A673 (cell line): ENCODE measurements at regions of chr16 and their contacts with region 1.

Region 1: GRCh38 chr16:1194665-1195392 is 30.2 kb downstream of the TPSG1 start:
- DNase-seq: no peak
- H3K4me3 ChIP-seq: no peak overlapping the region
- H3K27ac ChIP-seq: no peak overlapping the region
- H3K4me1 ChIP-seq: peaks cover 10% of the 10 kb centered on the region
- H3K27me3 ChIP-seq: no peaks in the 10 kb centered on the region
- CTCF ChIP-seq: peak; percentile 88

Region 2: DNA sequence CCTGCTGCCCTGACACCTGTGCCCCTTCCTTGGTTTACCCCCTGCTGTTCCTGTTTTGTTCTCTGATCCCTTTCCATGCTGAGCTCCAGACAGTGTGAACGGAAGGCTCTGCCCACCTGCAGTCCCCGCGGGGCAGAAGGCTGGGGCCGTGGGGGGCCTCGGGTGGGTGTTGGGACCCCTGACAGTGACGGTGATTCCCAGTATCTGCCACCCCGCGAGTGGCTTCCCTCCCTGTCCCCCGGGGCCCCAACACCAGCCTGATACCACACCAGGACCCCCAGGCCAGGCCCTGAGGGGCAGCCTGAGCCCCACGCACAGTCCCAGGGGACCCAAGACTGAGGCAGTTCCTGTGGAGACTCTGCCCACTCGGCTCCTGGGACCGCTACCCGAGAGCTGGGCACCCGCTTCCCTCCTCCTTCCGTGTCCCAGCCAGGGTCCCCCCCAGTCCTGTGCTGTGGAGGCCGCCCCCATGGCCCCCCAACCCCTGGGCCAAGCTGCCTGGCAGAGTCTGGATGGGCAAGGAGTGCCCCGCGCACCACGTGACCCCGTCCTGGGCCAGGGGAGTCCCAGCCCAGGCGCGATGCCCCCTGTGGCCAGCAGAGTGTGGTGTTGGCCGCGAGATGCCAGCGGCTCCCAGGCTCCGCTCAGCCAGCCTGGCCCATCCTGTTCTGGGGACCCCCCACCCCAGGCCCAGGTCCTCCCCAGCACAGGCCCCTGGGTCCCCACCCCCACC is 88.8 kb before region 1 on chr16:
- CTCF ChIA-PET with region 1: interaction called, 3 read pairs
- POLR2A ChIA-PET with region 1: no interaction called
- intact Hi-C with region 1: loop called (anchors 1 kb)
- DNase-seq: peak; percentile 83
- H3K4me3 ChIP-seq: no peak overlapping the region
- H3K27ac ChIP-seq: no peak overlapping the region
- H3K4me1 ChIP-seq: peaks cover 4% of the 10 kb centered on the region
- H3K27me3 ChIP-seq: no peaks in the 10 kb centered on the region
- CTCF ChIP-seq: peak; percentile 92